Activated naive CD8-positive, alpha-beta T cell treated with anti-CD3 and anti-CD28 coated beads, Interleukin-2, amount 10 ng/mL, durations not matched to agents 7 days and 5 days (primary cell): ENCODE measurements at regions of chr13 and their contacts with region 1.

Region 1: DNA sequence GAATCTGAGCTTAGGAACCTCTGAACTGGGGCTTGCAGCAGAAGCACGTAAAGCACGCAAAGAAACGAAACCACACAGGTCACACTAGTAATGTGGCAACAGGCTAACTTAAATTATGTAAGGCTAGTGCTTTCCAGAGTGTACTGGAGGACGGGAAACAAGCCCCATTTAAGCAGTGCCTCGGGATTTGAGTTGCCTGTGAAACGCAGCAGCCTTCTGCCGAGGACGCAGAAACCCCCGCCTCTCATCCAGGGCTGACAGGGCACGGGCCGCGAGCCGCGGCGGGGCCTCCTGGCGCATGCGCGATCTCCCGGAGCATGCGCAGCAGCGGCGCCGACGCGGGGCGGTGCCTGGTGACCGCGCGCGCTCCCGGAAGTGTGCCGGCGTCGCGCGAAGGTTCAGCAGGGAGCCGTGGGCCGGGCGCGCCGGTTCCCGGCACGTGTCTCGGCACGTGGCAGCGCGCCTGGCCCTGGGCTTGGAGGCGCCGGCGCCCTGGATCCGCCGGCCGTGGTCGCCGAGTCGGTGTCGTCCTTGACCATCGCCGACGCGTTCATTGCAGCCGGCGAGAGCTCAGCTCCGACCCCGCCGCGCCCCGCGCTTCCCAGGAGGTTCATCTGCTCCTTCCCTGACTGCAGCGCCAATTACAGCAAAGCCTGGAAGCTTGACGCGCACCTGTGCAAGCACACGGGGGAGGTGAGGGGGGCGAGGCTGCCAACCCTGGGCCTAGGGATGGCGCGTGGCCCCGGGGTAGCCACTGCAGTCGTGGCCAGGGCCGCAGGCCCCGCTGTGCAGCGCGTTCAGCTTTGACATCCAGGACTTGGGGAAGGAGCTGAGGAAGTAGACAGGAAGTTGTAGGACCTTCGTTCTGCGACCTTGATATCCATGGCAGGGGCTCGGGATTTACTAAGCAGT is at the start of gene GTF3A:
- DNase-seq: peak; percentile 97
- ATAC-seq: peak; percentile 74
- H3K4me3 Mint-ChIP-seq: peak within 1 kb of the TSS; percentile 88
- H3K27ac Mint-ChIP-seq: peak within 1 kb of the TSS; percentile 92
- H3K4me1 Mint-ChIP-seq: peaks cover 27% of the 10 kb centered on the region
- H3K27me3 Mint-ChIP-seq: no peaks in the 10 kb centered on the region
- total RNA-seq, gene GTF3A: 159 to 173 TPM

Region 2: GRCh38 chr13:27442071-27442647 is 17.7 kb after region 1 on chr13:
- POLR2A ChIA-PET with region 1: interaction called, 130 read pairs
- DNase-seq: no peak
- ATAC-seq: peak; percentile 25
- H3K4me3 Mint-ChIP-seq: peak overlapping the region; percentile 45
- H3K27ac Mint-ChIP-seq: peak overlapping the region; percentile 56
- H3K4me1 Mint-ChIP-seq: peaks cover 46% of the 10 kb centered on the region
- H3K27me3 Mint-ChIP-seq: no peaks in the 10 kb centered on the region

Region 3: GRCh38 chr13:27449936-27450828 is 25.7 kb after region 1 on chr13 and contains the start of gene MTIF3:
- POLR2A ChIA-PET with region 1: interaction called, 130 read pairs
- DNase-seq: peak; percentile 94
- ATAC-seq: peak; percentile 93
- H3K4me3 Mint-ChIP-seq: peak within 1 kb of the TSS; percentile 94
- H3K27ac Mint-ChIP-seq: peak within 1 kb of the TSS; percentile 95
- H3K4me1 Mint-ChIP-seq: peaks cover 47% of the 10 kb centered on the region
- H3K27me3 Mint-ChIP-seq: peaks cover 2% of the 10 kb centered on the region
- total RNA-seq, gene MTIF3: 51.5 to 60.4 TPM

Region 4: DNA sequence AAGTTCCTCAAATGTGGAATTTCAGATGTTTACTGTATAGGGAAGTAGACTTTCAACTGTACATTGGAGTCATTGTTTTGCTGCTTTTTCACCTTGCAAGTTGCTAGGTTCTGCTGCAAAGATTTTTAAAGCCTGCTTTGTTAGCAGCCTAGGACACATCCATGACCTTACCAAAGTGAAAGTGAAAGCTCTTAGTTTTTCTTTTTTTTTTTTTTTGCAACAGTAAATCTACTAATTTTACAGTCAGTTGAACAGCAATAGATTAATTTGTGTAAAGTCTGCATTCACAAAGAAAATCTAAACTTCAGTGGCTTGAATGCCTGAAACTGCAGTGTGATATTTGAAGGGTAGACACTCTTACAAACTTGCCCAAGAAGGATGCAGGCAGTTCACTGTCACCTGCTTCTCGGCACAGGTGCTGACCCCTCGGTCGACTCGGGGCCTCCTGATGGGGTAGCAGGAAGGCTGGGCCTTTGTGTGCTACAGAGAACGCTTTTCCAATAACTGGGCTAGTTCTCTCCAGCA is 30.9 kb after region 1 on chr13:
- POLR2A ChIA-PET with region 1: interaction called, 130 read pairs
- DNase-seq: peak; percentile 41
- ATAC-seq: peak; percentile 47
- H3K4me3 Mint-ChIP-seq: peak overlapping the region; percentile 92
- H3K27ac Mint-ChIP-seq: peak overlapping the region; percentile 97
- H3K4me1 Mint-ChIP-seq: peaks cover 19% of the 10 kb centered on the region
- H3K27me3 Mint-ChIP-seq: peaks cover 5% of the 10 kb centered on the region

Region 5: GRCh38 chr13:27476943-27477703 is 52.6 kb after region 1 on chr13:
- POLR2A ChIA-PET with region 1: no interaction called
- DNase-seq: no peak
- ATAC-seq: no peak
- H3K4me3 Mint-ChIP-seq: no peak overlapping the region
- H3K27ac Mint-ChIP-seq: no peak overlapping the region
- H3K4me1 Mint-ChIP-seq: peaks cover 20% of the 10 kb centered on the region
- H3K27me3 Mint-ChIP-seq: no peaks in the 10 kb centered on the region

Region 6: GRCh38 chr13:27620377-27621115 is 196.0 kb after region 1 on chr13 and contains the start of gene LNX2:
- POLR2A ChIA-PET with region 1: interaction called, 26 read pairs
- DNase-seq: peak; percentile 97
- ATAC-seq: peak; percentile 90
- H3K4me3 Mint-ChIP-seq: peak within 1 kb of the TSS; percentile 93
- H3K27ac Mint-ChIP-seq: peak within 1 kb of the TSS; percentile 95
- H3K4me1 Mint-ChIP-seq: peaks cover 44% of the 10 kb centered on the region
- H3K27me3 Mint-ChIP-seq: no peaks in the 10 kb centered on the region
- total RNA-seq, gene LNX2: 8.0 to 8.3 TPM